Activated T-helper 1 cell treated with anti-CD3 and anti-CD28 coated beads, Interleukin-12 subunit alpha, Interleukin-12 subunit beta, Interleukin-2, Interleukin-4 antibody, amounts not matched to agents 30 ng/mL and 10 ng/mL and 1 ng/mL, durations not matched to agents 14 hours and 24 hours and 36 hours (primary cell): ENCODE measurements at regions of chr14 and their contacts with region 1.

Region 1: DNA sequence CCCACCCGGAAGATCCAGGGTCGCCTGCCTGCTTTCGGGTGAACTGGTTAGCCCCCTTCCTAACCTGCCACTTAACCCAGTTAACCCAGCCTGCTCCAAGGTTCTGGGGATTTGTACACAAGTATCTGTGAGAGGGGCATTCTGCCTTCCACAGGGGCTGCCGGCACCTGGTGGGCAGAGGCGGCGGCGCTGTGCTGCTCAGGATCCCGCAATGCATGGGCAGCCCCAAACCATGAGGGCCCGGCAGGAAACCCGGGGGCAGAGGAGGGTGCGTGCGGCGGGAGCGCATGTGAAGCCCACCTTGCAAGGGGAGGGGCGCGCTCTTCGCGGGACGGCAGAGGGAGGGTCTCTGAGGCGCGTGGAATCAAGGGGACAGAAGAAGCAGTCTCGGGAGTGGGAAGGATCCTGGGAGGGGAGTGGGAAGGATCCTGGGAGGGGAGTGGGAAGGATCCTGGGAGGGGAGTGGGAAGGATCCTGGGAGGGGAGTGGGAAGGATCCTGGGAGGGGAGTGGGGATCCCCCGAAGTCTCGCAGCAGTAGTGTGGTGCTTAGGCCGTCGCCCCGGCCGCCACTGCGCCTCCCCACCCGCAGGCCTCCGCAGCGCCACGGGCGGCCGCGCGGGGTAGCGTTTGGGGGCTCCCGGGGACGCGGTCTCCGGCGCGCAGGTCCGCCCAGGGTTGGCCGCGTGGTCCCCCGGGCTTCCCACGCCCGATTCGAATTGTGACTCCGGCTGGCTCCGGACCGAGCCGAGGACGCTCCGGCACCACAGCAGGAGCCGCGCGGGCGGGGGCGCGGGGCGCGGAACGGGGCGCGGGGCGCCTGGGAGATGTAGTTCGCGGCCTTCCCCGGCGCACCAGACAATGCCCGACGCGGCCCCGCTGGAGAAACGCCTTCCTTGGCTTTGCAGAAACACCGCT is 4.9 kb upstream of the MTA1 start:
- DNase-seq: peak; percentile 61
- H3K4me3 Mint-ChIP-seq: peak overlapping the region; percentile 79
- H3K27ac Mint-ChIP-seq: no peak overlapping the region
- H3K4me1 Mint-ChIP-seq: peaks cover 5% of the 10 kb centered on the region
- H3K27me3 Mint-ChIP-seq: peaks cover 22% of the 10 kb centered on the region

Region 2: DNA sequence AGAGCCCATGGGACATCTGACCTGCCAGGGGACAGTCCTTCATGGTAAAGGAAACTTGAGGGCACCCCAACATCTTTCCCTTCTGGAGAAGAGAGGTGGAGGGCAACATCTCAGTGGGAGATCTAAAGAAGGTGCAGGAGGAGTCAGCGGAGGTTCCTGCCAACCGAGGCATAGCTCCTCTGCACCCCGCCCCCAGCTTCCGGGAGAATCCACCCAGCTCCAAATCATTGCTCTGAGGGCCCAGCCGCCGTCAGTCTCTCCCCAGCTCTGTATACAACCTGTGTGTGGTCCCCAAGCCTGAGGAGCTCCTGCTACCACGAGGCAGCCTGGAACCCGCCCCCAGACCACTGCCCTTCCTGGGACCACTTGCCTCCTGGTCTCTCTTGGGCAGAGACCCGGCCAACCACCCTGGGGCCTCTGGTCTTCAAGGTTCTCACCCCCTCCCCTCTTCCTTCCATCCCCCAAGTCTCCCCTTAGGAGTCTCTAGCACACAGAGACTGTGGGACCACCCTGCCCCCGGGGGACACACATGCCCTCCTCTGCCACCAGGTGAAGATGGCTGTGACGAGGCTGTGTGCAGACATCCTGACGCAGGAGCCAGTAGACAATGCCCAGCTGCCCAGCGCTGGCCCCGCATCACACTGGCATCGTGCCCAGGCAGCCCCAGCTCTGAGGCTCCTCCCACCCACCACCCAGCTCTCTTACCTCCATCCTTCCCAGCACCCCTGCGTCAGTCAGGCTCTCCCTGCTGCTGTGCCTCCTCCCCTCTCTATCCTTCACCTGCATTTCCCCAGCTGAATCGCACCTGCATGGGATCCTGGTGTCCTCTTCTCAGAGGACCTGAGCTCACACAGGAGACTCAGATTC is 220.6 kb before region 1 on chr14:
- intact Hi-C with region 1: loop called (anchors 5 kb)
- DNase-seq: no peak
- H3K4me3 Mint-ChIP-seq: no peak overlapping the region
- H3K27ac Mint-ChIP-seq: peak overlapping the region; percentile 20
- H3K4me1 Mint-ChIP-seq: peaks cover 12% of the 10 kb centered on the region
- H3K27me3 Mint-ChIP-seq: peaks cover 25% of the 10 kb centered on the region

Region 3: GRCh38 chr14:105375635-105376057 is 39.1 kb before region 1 on chr14:
- intact Hi-C with region 1: loop called (anchors 1 kb)
- DNase-seq: peak; percentile 25
- H3K4me3 Mint-ChIP-seq: peak overlapping the region; percentile 8
- H3K27ac Mint-ChIP-seq: peak overlapping the region; percentile 95
- H3K4me1 Mint-ChIP-seq: peaks cover 16% of the 10 kb centered on the region
- H3K27me3 Mint-ChIP-seq: no peaks in the 10 kb centered on the region